Ovary (tissue), 10 donors: ENCODE measurements at regions of chr2 and their contacts with region 1.

Region 1: GRCh38 chr2:66665124-66665984 is 230.4 kb downstream of the MEIS1 start:
- DNase-seq: no peak
- H3K4me3 ChIP-seq: no peak overlapping the region
- H3K27ac ChIP-seq: no peak overlapping the region
- H3K4me1 ChIP-seq: no peaks in the 10 kb centered on the region
- H3K27me3 ChIP-seq: no peaks in the 10 kb centered on the region
- CTCF ChIP-seq: no peak
- EP300 ChIP-seq: no peak
- POLR2A ChIP-seq: no peak

Region 2: GRCh38 chr2:66240286-66240685 is 425.1 kb before region 1 on chr2:
- intact Hi-C with region 1: loop called in 1 of 4 experiments (anchors 5 kb)
- DNase-seq: peak in 3 of 5 donors; percentile 42 to 51 (median 44)
- H3K4me3 ChIP-seq: no peak overlapping the region
- H3K27ac ChIP-seq: no peak overlapping the region
- H3K4me1 ChIP-seq: peaks cover 7% of the 10 kb centered on the region
- H3K27me3 ChIP-seq: no peaks in the 10 kb centered on the region
- CTCF ChIP-seq: no peak
- EP300 ChIP-seq: no peak
- POLR2A ChIP-seq: no peak

Region 3: DNA sequence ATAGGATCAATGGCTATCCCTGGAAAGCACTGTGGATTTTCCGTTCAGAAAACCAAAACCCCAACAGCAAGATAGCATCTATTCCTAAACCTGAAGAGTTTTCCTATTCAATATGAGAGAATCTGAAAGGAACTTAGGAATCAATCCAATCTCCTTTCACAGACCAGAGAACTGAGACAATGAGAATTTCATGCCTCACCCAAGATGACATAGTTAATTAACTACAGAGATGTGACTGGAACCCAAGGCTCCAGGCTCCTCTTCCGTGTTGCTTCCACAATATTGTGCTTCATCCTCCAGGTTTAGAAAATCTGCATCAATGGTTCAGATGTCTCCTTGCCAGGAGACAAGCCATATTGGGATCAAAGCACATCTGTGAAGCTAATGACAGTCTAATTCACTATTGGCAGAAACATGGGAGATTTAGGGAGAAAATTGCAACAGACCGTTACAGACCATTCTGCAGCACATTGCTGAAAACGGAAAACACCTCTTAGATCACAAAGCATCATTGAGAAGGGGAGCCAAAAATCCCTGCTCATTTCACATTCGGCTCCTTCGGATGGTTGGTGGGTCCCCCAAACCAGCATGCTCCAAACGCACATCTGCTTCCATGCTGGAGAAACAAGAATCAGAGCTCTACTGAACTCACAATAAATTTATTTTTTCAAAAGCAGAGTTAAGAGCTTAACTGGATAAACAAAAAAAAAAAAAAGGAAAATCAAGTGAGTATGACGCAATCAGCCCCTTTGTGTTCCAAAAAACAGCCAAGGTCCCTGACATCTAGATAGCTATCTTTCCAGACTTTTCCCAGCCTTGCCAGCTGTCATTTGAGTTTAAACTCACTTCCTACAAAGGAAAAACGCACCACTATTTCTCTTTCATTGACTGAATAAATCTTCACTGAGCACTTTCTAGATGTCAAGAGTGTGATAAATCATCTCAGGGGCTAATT is 1107.1 kb after region 1 on chr2:
- intact Hi-C with region 1: loop called in 1 of 4 experiments (anchors 10 kb)
- DNase-seq: no peak
- H3K4me3 ChIP-seq: no peak overlapping the region
- H3K27ac ChIP-seq: no peak overlapping the region
- H3K4me1 ChIP-seq: no peaks in the 10 kb centered on the region
- H3K27me3 ChIP-seq: no peaks in the 10 kb centered on the region
- CTCF ChIP-seq: no peak
- EP300 ChIP-seq: no peak
- POLR2A ChIP-seq: no peak